GM10248 (cell line): ENCODE measurements at regions of chr4 and their contacts with region 1.

Region 1: GRCh38 chr4:46844325-46844917 is 64.6 kb downstream of the COX7B2 start:
- DNase-seq: peak; percentile 26
- CTCF ChIP-seq: peak; percentile 68

Region 2: DNA sequence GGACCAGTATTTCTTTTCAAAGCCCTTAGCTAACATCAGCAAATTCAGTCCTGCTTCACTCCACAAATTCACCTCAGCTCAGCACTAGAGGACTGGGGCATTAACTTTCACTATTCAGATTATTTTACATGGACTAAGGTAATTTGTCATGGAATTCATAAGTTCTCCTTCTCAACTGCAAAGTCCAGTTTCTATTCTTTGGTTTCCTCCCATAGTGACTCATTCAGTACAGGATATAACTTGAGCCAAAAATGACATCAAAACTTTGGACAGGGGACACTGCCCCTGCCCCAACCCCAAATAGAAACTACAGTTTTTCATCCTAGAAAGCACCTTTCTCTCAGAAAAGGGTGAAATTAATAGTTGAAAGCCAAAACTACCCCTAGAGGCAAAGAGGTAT is 11.9 kb after region 1 on chr4:
- CTCF ChIA-PET with region 1: interaction called, 12 read pairs
- POLR2A ChIA-PET with region 1: no interaction called
- DNase-seq: no peak
- CTCF ChIP-seq: no peak

Region 3: DNA sequence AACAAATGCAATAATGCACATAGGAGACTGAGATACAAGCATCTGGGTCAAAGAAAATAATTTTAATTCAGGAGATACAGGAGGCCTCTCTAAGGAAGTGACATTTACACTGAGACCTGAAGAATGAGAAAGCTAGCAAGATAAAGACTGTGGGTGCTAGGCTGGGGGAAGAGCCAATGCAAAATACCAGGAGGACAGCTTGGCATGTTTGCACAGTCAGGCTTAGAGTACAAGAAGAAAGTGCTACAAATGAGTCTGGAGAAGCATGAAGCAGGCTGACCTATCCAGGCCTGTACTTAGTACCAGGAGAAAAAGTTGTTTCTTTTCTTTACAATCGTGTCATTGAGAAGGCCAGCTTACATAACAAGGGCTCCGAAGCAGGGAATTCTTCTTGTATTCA is 243.9 kb after region 1 on chr4:
- CTCF ChIA-PET with region 1: no interaction called
- POLR2A ChIA-PET with region 1: no interaction called
- DNase-seq: no peak
- CTCF ChIP-seq: no peak